HCT116 (cell line): ENCODE measurements at regions of chr10 and their contacts with region 1.

Region 1: DNA sequence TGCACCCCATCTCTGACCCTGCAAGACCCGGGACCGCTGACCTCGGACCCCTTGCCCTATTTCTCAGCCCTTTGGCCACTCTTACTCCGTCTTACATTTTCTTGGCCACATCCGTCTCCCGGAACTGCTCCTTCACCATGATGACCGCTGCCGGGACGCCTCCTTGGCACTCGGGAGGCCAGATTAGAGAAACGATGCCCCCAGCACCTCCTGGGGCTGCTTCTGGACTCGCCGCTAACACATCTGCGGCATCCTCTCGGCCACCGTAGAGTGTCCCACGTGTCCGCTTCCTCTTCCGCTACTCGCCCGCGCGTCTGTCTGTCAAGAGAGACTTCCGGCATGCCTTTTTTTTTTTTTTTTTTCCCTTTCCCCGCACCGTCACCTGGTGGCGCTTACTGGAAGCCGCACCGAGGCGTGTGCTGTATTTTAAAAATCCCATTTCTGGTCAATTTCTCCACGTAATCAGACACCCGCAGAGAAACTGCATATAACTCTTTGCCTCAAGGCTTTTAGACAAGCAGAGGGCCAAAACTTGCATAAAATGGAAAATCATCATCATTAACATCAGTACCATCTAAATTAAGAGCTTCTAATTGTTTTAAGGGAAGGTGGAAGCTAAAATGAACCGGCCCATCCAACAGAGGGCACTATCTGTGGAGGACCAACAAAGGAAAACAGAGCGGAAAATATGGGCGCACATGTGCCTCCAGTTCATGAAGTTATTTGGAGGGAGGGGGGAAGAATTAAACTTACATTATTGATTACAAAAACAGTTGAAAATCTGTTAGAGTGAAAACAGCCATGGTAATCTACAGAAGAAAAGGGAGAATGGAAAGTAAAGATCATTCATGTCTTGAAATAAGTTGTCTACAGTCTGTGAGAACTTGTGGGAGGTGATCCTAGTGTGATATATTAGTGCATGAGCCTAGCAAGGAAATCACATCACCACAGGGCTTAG is at the start of gene POLR3A:
- DNase-seq: peak; percentile 96
- ATAC-seq: peak; percentile 48
- H3K4me3 ChIP-seq: peak within 1 kb of the TSS; percentile 67 to 97
- H3K27ac ChIP-seq: peak within 1 kb of the TSS; percentile 63
- H3K4me1 ChIP-seq: peaks cover 3 to 40% of the 10 kb centered on the region in 2 experiments
- H3K27me3 ChIP-seq: no peaks in the 10 kb centered on the region
- CTCF ChIP-seq: peak; percentile 65 to 99 (median 86); a peak in 5 of 6 replicates
- POLR2A ChIP-seq: no peak
- RAD21 ChIP-seq: peak; percentile 75
- total RNA-seq, gene POLR3A: 26.6 TPM

Region 2: GRCh38 chr10:77165445-77166208 is 863.9 kb before region 1 on chr10:
- CTCF ChIA-PET with region 1: no interaction called
- POLR2A ChIA-PET with region 1: no interaction called
- RAD21 ChIA-PET with region 1: no interaction called
- intact Hi-C with region 1: loop called (anchors 5 kb)
- DNase-seq: peak; percentile 51
- ATAC-seq: peak; percentile 90
- H3K4me3 ChIP-seq: no peak overlapping the region
- H3K27ac ChIP-seq: no peak overlapping the region
- H3K4me1 ChIP-seq: peaks cover 0 to 31% of the 10 kb centered on the region in 2 experiments; a peak in 2 of 4 replicates
- H3K27me3 ChIP-seq: peaks cover 34% of the 10 kb centered on the region
- CTCF ChIP-seq: peak; percentile 72 to 78 (median 73)
- POLR2A ChIP-seq: no peak
- RAD21 ChIP-seq: peak; percentile 86

Region 3: GRCh38 chr10:77846718-77847630 is 182.6 kb before region 1 on chr10:
- CTCF ChIA-PET with region 1: interaction called, 5 read pairs
- POLR2A ChIA-PET with region 1: no interaction called
- RAD21 ChIA-PET with region 1: interaction called in 1 of 2 experiments, 3 read pairs
- intact Hi-C with region 1: loop called (anchors 2 kb)
- DNase-seq: peak; percentile 16
- ATAC-seq: peak; percentile 77
- H3K4me3 ChIP-seq: no peak overlapping the region
- H3K27ac ChIP-seq: peak overlapping the region; percentile 23
- H3K4me1 ChIP-seq: peaks cover 27 to 38% of the 10 kb centered on the region in 2 experiments
- H3K27me3 ChIP-seq: no peaks in the 10 kb centered on the region
- CTCF ChIP-seq: peak; percentile 80 to 91 (median 89)
- POLR2A ChIP-seq: no peak
- RAD21 ChIP-seq: peak; percentile 88

Region 4: GRCh38 chr10:77889277-77889903 is 140.2 kb before region 1 on chr10:
- CTCF ChIA-PET with region 1: interaction called, 14 read pairs
- POLR2A ChIA-PET with region 1: no interaction called
- RAD21 ChIA-PET with region 1: no interaction called
- intact Hi-C with region 1: no loop called
- DNase-seq: peak; percentile 80
- ATAC-seq: peak; percentile 90
- H3K4me3 ChIP-seq: peak overlapping the region in 1 of 2 experiments; percentile 24; a peak in 2 of 4 replicates
- H3K27ac ChIP-seq: peak overlapping the region; percentile 59
- H3K4me1 ChIP-seq: peaks cover 24 to 37% of the 10 kb centered on the region in 2 experiments
- H3K27me3 ChIP-seq: no peaks in the 10 kb centered on the region
- CTCF ChIP-seq: no peak
- POLR2A ChIP-seq: no peak
- RAD21 ChIP-seq: peak; percentile 26; the same call in 1 of the 2 replicates

Region 5: DNA sequence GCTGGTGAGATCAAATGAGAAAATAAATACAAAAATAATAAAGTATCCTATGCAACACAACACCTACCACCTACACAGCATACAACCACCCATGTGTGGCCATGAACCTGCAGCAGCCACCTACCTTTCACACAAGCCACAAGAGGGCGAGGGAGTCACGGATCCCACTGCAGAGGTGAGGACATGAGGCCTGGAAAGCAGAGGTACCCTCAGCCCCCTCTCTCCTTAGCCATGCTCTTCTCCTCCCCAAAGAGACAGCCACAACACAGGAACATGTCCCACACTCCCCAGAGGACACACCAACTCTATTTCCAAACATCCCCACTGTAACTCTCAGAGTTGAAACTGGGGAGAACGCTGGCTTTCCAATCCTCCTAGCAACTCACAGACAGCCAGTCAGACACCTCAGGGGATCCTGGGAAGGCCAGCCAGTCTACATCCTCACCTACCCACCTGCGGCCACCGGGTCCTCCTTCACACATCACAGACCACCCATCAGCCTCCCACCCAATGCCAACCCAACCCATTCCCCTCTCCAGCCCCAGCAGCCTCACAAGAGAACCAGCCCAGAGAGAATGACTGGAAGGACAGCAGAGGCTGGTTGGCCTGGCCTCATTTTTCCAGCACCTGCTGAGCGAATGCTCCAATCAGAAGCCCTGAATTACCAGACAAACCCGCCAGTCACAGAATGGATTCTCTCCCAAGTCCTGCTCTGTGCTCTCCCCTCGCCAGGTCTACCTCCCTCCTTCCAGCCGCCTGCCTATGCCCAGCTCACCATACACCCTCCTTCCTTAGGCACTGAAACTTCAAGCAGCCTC is 121.4 kb before region 1 on chr10:
- CTCF ChIA-PET with region 1: no interaction called
- POLR2A ChIA-PET with region 1: interaction called, 3 read pairs
- RAD21 ChIA-PET with region 1: no interaction called
- intact Hi-C with region 1: loop called (anchors 5 kb)
- DNase-seq: no peak
- ATAC-seq: peak; percentile 89
- H3K4me3 ChIP-seq: no peak overlapping the region
- H3K27ac ChIP-seq: no peak overlapping the region
- H3K4me1 ChIP-seq: peaks cover 21 to 58% of the 10 kb centered on the region in 2 experiments
- H3K27me3 ChIP-seq: no peaks in the 10 kb centered on the region
- CTCF ChIP-seq: peak; percentile 60 to 61 (median 61)
- POLR2A ChIP-seq: no peak
- RAD21 ChIP-seq: peak; percentile 77

Region 6: GRCh38 chr10:77959384-77959783 is 70.2 kb before region 1 on chr10:
- CTCF ChIA-PET with region 1: no interaction called
- POLR2A ChIA-PET with region 1: no interaction called
- RAD21 ChIA-PET with region 1: no interaction called
- intact Hi-C with region 1: no loop called
- DNase-seq: no peak
- ATAC-seq: no peak
- H3K4me3 ChIP-seq: no peak overlapping the region
- H3K27ac ChIP-seq: no peak overlapping the region
- H3K4me1 ChIP-seq: no peaks in the 10 kb centered on the region
- H3K27me3 ChIP-seq: no peaks in the 10 kb centered on the region
- CTCF ChIP-seq: no peak
- POLR2A ChIP-seq: no peak
- RAD21 ChIP-seq: no peak

Region 7: GRCh38 chr10:77983384-77984341 is 45.9 kb before region 1 on chr10:
- CTCF ChIA-PET with region 1: no interaction called
- POLR2A ChIA-PET with region 1: no interaction called
- RAD21 ChIA-PET with region 1: no interaction called
- intact Hi-C with region 1: no loop called
- DNase-seq: no peak
- ATAC-seq: no peak
- H3K4me3 ChIP-seq: no peak overlapping the region
- H3K27ac ChIP-seq: no peak overlapping the region
- H3K4me1 ChIP-seq: no peaks in the 10 kb centered on the region
- H3K27me3 ChIP-seq: no peaks in the 10 kb centered on the region
- CTCF ChIP-seq: no peak
- POLR2A ChIP-seq: no peak
- RAD21 ChIP-seq: no peak

Region 8: DNA sequence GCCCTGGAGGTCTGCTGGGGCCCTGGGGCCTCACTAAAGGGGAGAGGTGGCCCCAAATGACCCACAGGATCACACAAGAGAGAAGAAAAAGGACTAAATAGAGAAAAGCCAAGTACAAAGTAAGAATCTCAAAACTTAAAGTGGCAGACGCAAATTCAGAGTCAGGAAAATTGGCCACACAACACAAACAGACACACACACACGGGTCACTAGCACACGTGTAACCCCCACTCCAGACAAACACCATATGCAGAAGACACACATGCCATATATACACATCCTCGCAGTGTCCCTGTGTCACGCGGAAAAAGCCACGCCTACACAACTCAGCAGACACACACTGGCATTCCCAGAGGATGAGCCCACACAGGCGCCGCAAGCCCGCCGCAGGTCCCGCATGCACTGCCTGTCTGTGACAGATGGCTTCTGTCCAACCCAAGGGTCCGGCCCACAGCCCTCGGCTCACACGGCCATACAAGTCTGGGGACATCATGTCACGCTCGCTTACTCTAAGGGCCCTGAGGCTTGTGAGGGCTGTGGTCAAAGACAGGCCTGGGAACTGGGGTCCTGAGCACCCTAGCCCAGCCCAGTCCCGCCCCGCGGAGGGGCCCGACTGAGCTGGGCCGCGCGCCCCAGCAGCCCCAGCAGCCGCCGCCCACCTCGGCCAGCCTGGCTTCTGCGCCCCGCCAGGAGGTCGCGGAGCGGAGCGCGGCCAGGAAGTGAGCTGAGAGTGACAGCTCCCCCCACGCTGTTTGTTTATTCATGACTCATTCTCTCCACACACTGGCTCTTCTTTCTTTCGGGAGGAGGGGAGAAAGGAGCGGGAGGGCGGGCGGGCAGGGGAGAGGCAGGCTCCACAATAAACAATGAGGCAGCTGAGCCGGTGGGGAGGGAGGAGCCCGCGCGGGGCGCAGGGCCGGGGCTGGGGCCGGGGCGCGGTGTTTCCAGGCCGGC is 943.7 kb after region 1 on chr10:
- CTCF ChIA-PET with region 1: no interaction called
- POLR2A ChIA-PET with region 1: no interaction called
- RAD21 ChIA-PET with region 1: no interaction called
- intact Hi-C with region 1: loop called (anchors 5 kb)
- DNase-seq: peak; percentile 84
- ATAC-seq: peak; percentile 64
- H3K4me3 ChIP-seq: peak overlapping the region; percentile 42 to 61
- H3K27ac ChIP-seq: peak overlapping the region; percentile 96
- H3K4me1 ChIP-seq: peaks cover 30 to 48% of the 10 kb centered on the region in 2 experiments
- H3K27me3 ChIP-seq: no peaks in the 10 kb centered on the region
- CTCF ChIP-seq: no peak
- POLR2A ChIP-seq: no peak
- RAD21 ChIP-seq: no peak